OCI-LY7 (cell line): ENCODE measurements at regions of chr6 and their contacts with region 1.

Region 1: GRCh38 chr6:167285077-167285770 is 5.9 kb upstream of the UNC93A start:
- DNase-seq: no peak
- H3K4me3 ChIP-seq: no peak overlapping the region
- H3K27ac ChIP-seq: no peak overlapping the region
- H3K4me1 ChIP-seq: no peaks in the 10 kb centered on the region
- CTCF ChIP-seq: no peak

Region 2: GRCh38 chr6:167219967-167220512 is 65.2 kb before region 1 on chr6:
- CTCF ChIA-PET with region 1: no interaction called
- POLR2A ChIA-PET with region 1: no interaction called
- intact Hi-C with region 1: loop called (anchors 1 kb)
- DNase-seq: no peak
- H3K4me3 ChIP-seq: no peak overlapping the region
- H3K27ac ChIP-seq: no peak overlapping the region
- H3K4me1 ChIP-seq: no peaks in the 10 kb centered on the region
- CTCF ChIP-seq: no peak